WTC11 (cell line): ENCODE measurements at regions of chr19 and their contacts with region 1.

Region 1: GRCh38 chr19:3100865-3101730 is 6.9 kb downstream of the GNA11 start:
- DNase-seq: no peak
- ATAC-seq: no peak
- H3K4me3 Mint-ChIP-seq: no peak overlapping the region
- H3K27ac Mint-ChIP-seq: peak overlapping the region; percentile 45
- H3K4me1 Mint-ChIP-seq: peaks cover 11% of the 10 kb centered on the region
- H3K27me3 Mint-ChIP-seq: no peaks in the 10 kb centered on the region
- CTCF ChIP-seq: no peak

Region 2: DNA sequence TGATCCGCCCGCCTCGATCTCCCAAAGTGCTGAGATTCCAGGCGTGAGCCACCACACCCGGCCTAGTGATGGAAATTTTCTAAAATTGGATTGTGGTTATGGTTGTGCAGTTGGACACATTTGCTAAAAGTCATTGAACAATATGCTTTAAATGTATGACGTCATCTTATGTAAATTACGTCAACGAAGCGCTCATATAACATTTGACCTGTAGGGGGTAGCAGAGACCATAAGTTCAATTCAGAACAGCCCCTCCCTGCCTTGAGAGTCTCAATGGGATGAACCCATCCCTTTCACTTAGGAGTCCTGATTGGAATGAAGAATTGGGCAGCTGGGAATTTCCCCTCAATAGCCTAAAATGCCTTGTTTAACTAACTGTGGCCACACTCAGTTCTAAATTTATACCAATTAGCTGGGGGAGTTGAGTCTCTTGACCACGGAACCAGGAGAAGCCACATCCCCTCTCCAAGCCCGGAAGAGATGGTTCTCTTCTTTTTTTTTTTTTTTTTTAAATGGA is 139.0 kb before region 1 on chr19:
- CTCF ChIA-PET with region 1: interaction called, 51 read pairs
- POLR2A ChIA-PET with region 1: interaction called, 3 read pairs
- DNase-seq: peak; percentile 52
- ATAC-seq: peak; percentile 84
- H3K4me3 Mint-ChIP-seq: no peak overlapping the region
- H3K27ac Mint-ChIP-seq: peak overlapping the region; percentile 92
- H3K4me1 Mint-ChIP-seq: peaks cover 2% of the 10 kb centered on the region; the same call in 1 of the 2 replicates
- H3K27me3 Mint-ChIP-seq: no peaks in the 10 kb centered on the region; the same call in 1 of the 2 replicates
- CTCF ChIP-seq: peak; percentile 83

Region 3: GRCh38 chr19:3006075-3006767 is 94.9 kb before region 1 on chr19:
- CTCF ChIA-PET with region 1: interaction called, 12 read pairs
- POLR2A ChIA-PET with region 1: no interaction called
- DNase-seq: peak; percentile 96
- ATAC-seq: peak; percentile 95
- H3K4me3 Mint-ChIP-seq: no peak overlapping the region
- H3K27ac Mint-ChIP-seq: no peak overlapping the region
- H3K4me1 Mint-ChIP-seq: no peaks in the 10 kb centered on the region
- H3K27me3 Mint-ChIP-seq: no peaks in the 10 kb centered on the region
- CTCF ChIP-seq: no peak

Region 4: GRCh38 chr19:3035542-3036118 is 65.5 kb before region 1 on chr19:
- CTCF ChIA-PET with region 1: interaction called, 36 read pairs
- POLR2A ChIA-PET with region 1: interaction called, 3 read pairs
- DNase-seq: peak; percentile 98
- ATAC-seq: peak; percentile 87
- H3K4me3 Mint-ChIP-seq: peak overlapping the region; percentile 86
- H3K27ac Mint-ChIP-seq: peak overlapping the region; percentile 93
- H3K4me1 Mint-ChIP-seq: peaks cover 27% of the 10 kb centered on the region
- H3K27me3 Mint-ChIP-seq: peaks cover 66% of the 10 kb centered on the region
- CTCF ChIP-seq: no peak

Region 5: DNA sequence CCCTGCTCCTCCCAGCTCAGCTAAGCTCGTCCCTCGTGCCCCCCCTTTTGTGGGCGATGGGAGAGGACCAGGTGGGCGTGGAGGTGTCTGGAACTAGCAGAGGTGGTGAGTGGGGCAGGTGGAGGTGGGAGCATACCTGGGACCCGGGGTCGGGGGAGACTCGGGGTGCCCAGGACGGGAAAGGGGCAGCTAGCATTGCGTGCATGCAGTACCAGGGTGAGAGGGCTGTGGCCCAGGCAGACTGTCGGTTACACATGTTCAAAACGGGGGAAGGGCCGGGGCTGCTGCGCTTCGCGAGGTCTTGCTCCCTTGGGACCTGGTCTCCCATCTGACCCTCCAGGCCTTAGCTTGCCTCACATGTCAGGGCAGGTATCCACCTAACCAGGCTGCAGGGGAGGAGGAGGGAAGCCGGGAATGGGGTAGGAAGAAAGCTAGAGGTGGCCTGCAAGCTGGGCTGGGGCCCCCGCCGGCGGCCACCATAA is 47.8 kb before region 1 on chr19:
- CTCF ChIA-PET with region 1: interaction called, 12 read pairs
- POLR2A ChIA-PET with region 1: no interaction called
- DNase-seq: no peak
- ATAC-seq: no peak
- H3K4me3 Mint-ChIP-seq: no peak overlapping the region
- H3K27ac Mint-ChIP-seq: no peak overlapping the region
- H3K4me1 Mint-ChIP-seq: peaks cover 39% of the 10 kb centered on the region
- H3K27me3 Mint-ChIP-seq: peaks cover 4% of the 10 kb centered on the region
- CTCF ChIP-seq: no peak

Region 6: DNA sequence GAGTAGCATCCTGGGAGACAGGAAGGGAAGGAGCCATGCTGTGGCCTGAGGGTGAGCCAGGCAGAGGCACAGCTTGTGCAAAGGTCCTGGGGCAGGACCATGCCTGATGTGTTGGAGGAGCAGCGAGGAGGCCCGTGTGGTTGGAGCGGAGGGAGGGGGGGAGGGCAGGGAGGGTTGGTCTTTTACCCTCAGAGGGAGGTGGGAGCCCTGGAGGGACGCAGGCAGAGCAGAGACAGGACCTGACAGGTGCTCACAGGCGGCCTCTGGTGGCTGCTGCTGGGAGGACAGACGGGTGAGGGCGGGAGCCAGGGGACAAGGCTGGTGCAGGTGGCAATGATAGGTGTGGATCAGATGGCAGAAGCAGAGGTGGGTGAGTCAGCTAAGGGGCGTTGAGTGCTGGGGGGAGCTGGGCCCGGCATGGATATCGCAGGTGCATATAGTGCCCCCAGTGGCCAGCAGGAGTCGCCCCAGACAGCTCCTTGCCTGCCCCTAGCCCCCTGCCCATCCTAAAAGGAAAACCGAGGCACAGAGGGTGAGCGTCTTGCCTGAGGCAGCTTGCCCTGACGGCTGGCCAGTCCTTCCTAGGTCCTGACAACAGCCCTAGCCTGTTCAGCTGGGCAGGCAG is 24.9 kb after region 1 on chr19:
- CTCF ChIA-PET with region 1: interaction called, 30 read pairs
- POLR2A ChIA-PET with region 1: no interaction called
- DNase-seq: peak; percentile 85
- ATAC-seq: peak; percentile 98
- H3K4me3 Mint-ChIP-seq: no peak overlapping the region
- H3K27ac Mint-ChIP-seq: no peak overlapping the region
- H3K4me1 Mint-ChIP-seq: no peaks in the 10 kb centered on the region
- H3K27me3 Mint-ChIP-seq: no peaks in the 10 kb centered on the region
- CTCF ChIP-seq: peak; percentile 80